Dorsolateral prefrontal cortex (tissue), 120 donors: ENCODE measurements at regions of chr15 and their contacts with region 1.

Region 1: GRCh38 chr15:65384895-65385858 is 7.4 kb upstream of the IGDCC3 start:
- DNase-seq: peak; percentile 85 to 92 (median 90)
- H3K4me3 ChIP-seq: peak overlapping the region; percentile 3 to 65 (median 49)
- H3K27ac ChIP-seq: peak overlapping the region in 58 of 59 donors; percentile 3 to 90 (median 78)
- H3K27me3 ChIP-seq: no peaks in the 10 kb centered on the region
- CTCF ChIP-seq: peak; percentile 72 to 97 (median 90)

Region 2: GRCh38 chr15:65069179-65069578 is 316.0 kb before region 1 on chr15:
- intact Hi-C with region 1: no loop called
- DNase-seq: no peak
- H3K4me3 ChIP-seq: no peak overlapping the region
- H3K27ac ChIP-seq: peak overlapping the region in 16 of 59 donors; percentile 3 to 83 (median 68)
- H3K27me3 ChIP-seq: peaks cover 0 to 37% (median 15%) of the 10 kb centered on the region in 45 donors
- CTCF ChIP-seq: no peak

Region 3: GRCh38 chr15:65318870-65319356 is 66.3 kb before region 1 on chr15:
- intact Hi-C with region 1: loop called (anchors 1 kb)
- DNase-seq: peak; percentile 70 to 88 (median 84)
- H3K4me3 ChIP-seq: no peak overlapping the region
- H3K27ac ChIP-seq: peak overlapping the region in 16 of 59 donors; percentile 0 to 73 (median 29)
- H3K27me3 ChIP-seq: no peaks in the 10 kb centered on the region
- CTCF ChIP-seq: peak; percentile 85 to 99 (median 97)